Motor neuron (in vitro differentiated cells): ENCODE measurements at regions of chr10 and their contacts with region 1.

Region 1: DNA sequence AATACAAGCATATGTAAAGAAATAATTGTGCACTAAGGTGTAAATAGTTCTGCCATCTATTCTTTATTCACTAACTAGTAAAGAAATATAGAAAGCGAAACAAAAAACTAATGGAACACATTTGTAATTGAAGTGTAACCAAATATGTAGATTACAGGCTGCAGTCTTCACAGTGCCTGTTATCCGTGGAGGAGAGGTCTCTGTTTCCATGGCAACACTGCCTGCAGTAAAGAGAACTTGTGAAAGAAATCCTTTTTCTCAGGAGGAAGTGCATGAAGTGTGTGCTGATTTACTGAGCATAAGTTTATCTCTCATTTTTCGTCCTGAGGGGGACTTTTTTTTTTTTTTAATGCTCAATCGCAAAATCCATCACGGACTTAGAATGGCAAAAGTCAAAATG is 102.5 kb downstream of the APBB1IP start:
- ATAC-seq: peak in 6 of 8 experiments; percentile 24 to 72 (median 52)
- H3K4me3 ChIP-seq: no peak overlapping the region
- H3K27ac ChIP-seq: no peak overlapping the region
- H3K4me1 ChIP-seq: peaks cover 0 to 16% of the 10 kb centered on the region in 2 donors

Region 2: GRCh38 chr10:26367771-26368170 is 172.8 kb before region 1 on chr10:
- in situ Hi-C with region 1: loop called in 1 of 9 experiments (anchors 25 kb)
- ATAC-seq: peak in 4 of 8 experiments; percentile 36 to 86 (median 69)
- H3K4me3 ChIP-seq: no peak overlapping the region
- H3K27ac ChIP-seq: no peak overlapping the region
- H3K4me1 ChIP-seq: no peaks in the 10 kb centered on the region

Region 3: DNA sequence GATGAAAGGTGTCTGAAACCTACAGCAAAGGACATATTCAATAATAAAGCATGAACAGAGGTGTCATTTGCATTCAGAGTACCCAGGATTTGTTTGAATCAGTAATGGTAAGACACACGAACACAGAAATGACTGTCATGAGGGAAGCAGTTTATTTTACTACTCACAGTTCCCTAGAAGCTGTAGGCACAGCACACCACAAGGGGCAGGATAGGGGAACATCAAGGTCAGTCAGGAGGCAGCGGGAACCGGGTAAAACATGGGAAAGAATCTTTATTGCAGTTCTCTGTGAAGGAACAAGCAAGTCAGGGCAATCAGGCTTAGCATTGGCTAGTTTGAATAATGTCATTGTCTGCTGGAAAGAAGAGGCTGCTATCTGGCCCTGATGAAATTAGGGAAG is 86.7 kb after region 1 on chr10:
- in situ Hi-C with region 1: loop called in 1 of 9 experiments (anchors 25 kb)
- ATAC-seq: peak in 7 of 8 experiments; percentile 43 to 80 (median 77)
- H3K4me3 ChIP-seq: no peak overlapping the region
- H3K27ac ChIP-seq: no peak overlapping the region
- H3K4me1 ChIP-seq: no peaks in the 10 kb centered on the region